ENCODE measurements at regions of chr18 and their contacts with region 1.

Region 1: GRCh38 chr18:22174341-22175145 is 5.2 kb downstream of the GATA6 start:
- DNase-seq: peak; percentile 76
- H3K4me3 ChIP-seq: peak overlapping the region; percentile 74 to 83 (median 82)
- H3K27ac ChIP-seq: peak overlapping the region; percentile 87
- H3K4me1 ChIP-seq: peaks cover 51% of the 10 kb centered on the region
- H3K27me3 ChIP-seq: no peaks in the 10 kb centered on the region
- CTCF ChIP-seq: peak in 1 of 2 donors; percentile 14
- POLR2A ChIP-seq: no peak

Region 2: GRCh38 chr18:22185273-22185672 is 10.7 kb after region 1 on chr18:
- CTCF ChIA-PET with region 1: interaction called, 9 read pairs
- POLR2A ChIA-PET with region 1: interaction called, 4 read pairs
- dilution Hi-C with region 1: no loop called
- intact Hi-C with region 1: loop called (anchors 1 kb)
- DNase-seq: peak; percentile 21
- H3K4me3 ChIP-seq: no peak overlapping the region
- H3K27ac ChIP-seq: no peak overlapping the region
- H3K4me1 ChIP-seq: peaks cover 62% of the 10 kb centered on the region
- H3K27me3 ChIP-seq: no peaks in the 10 kb centered on the region
- CTCF ChIP-seq: peak in 1 of 2 donors; percentile 26
- POLR2A ChIP-seq: no peak

Region 3: GRCh38 chr18:22194151-22194598 is 19.6 kb after region 1 on chr18:
- CTCF ChIA-PET with region 1: interaction called, 9 read pairs
- POLR2A ChIA-PET with region 1: interaction called, 4 read pairs
- dilution Hi-C with region 1: no loop called
- intact Hi-C with region 1: loop called (anchors 1 kb)
- DNase-seq: peak; percentile 79
- H3K4me3 ChIP-seq: no peak overlapping the region
- H3K27ac ChIP-seq: peak overlapping the region; percentile 83
- H3K4me1 ChIP-seq: peaks cover 62% of the 10 kb centered on the region
- H3K27me3 ChIP-seq: no peaks in the 10 kb centered on the region
- CTCF ChIP-seq: no peak
- POLR2A ChIP-seq: no peak

Region 4: DNA sequence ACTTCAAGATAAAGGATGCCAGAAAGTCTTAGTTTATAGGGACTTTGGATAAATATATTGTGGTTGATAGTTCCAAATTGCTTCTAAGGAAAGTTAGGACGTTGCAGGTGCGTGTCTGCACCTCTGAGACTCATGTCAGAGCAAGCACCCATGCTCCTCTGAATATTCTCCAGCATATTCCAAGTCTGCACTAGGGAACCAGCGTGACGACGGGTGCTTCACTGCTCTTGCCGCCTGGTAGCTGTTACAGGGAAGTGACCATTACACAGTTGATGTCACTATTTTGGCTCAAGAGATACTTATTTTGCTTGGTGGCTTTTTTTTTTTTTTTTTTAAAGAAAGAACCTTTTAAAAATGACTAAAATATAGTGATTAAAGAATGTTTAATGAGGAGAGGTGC is 30.5 kb after region 1 on chr18:
- CTCF ChIA-PET with region 1: no interaction called
- POLR2A ChIA-PET with region 1: no interaction called
- dilution Hi-C with region 1: no loop called
- intact Hi-C with region 1: no loop called
- DNase-seq: no peak
- H3K4me3 ChIP-seq: no peak overlapping the region
- H3K27ac ChIP-seq: no peak overlapping the region
- H3K4me1 ChIP-seq: peaks cover 2% of the 10 kb centered on the region
- H3K27me3 ChIP-seq: no peaks in the 10 kb centered on the region
- CTCF ChIP-seq: no peak
- POLR2A ChIP-seq: no peak

Region 5: GRCh38 chr18:22432672-22433137 is 258.2 kb after region 1 on chr18:
- CTCF ChIA-PET with region 1: no interaction called
- POLR2A ChIA-PET with region 1: no interaction called
- dilution Hi-C with region 1: loop called (anchors 25 kb)
- intact Hi-C with region 1: no loop called
- DNase-seq: peak; percentile 93
- H3K4me3 ChIP-seq: no peak overlapping the region
- H3K27ac ChIP-seq: peak overlapping the region; percentile 67
- H3K4me1 ChIP-seq: peaks cover 25% of the 10 kb centered on the region
- H3K27me3 ChIP-seq: no peaks in the 10 kb centered on the region
- CTCF ChIP-seq: no peak
- POLR2A ChIP-seq: peak; percentile 46

Region 6: DNA sequence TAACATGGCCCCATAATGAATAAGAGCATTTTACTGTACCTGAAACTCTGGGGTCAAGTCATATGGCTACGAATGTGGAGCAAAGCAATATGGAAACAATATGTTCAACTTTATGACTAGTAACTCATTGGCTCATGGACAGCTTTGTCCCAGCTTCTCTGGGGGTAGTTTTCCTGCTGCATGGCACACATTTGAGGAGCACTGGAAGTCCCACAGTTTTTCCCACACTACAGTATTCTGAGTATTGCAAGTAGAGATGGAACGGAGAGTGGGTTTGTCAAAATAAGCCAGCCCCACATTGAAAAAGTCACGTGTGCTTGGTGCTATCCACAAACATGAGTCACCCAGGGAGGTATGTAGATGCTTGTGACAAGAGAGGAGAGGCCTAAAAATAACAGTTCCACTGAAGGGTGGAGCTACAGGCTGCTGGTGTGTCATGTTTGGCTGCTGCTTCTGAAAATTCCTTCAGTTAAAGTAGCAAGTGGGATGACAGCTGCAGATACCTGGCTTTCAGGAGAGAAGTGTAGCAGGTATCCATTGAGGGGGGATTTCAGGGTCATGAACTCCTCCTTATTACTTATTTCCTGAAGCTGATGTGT is 291.4 kb after region 1 on chr18:
- CTCF ChIA-PET with region 1: no interaction called
- POLR2A ChIA-PET with region 1: no interaction called
- dilution Hi-C with region 1: no loop called
- intact Hi-C with region 1: loop called (anchors 1 kb)
- DNase-seq: peak; percentile 73
- H3K4me3 ChIP-seq: no peak overlapping the region
- H3K27ac ChIP-seq: peak overlapping the region; percentile 97
- H3K4me1 ChIP-seq: peaks cover 49% of the 10 kb centered on the region
- H3K27me3 ChIP-seq: no peaks in the 10 kb centered on the region
- CTCF ChIP-seq: no peak
- POLR2A ChIP-seq: no peak

Measured in endothelial cell of umbilical vein (primary cell).